B cell (primary cell): ENCODE measurements at regions of chrX and their contacts with region 1.

Region 1: GRCh38 chrX:74614093-74614909 is at the start of gene RLIM:
- DNase-seq: peak; percentile 94
- ATAC-seq: peak; percentile 85
- H3K4me3 ChIP-seq: peak within 1 kb of the TSS; percentile 67 to 94 (median 75)
- H3K4me3 Mint-ChIP-seq: peak within 1 kb of the TSS; percentile 99
- H3K27ac ChIP-seq: peak within 1 kb of the TSS; percentile 98 to 99
- H3K27ac Mint-ChIP-seq: peak within 1 kb of the TSS; percentile 100
- H3K4me1 ChIP-seq: peaks cover 0 to 14% of the 10 kb centered on the region in 2 donors
- H3K4me1 Mint-ChIP-seq: peaks cover 23% of the 10 kb centered on the region
- H3K27me3 ChIP-seq: no peaks in the 10 kb centered on the region
- H3K27me3 Mint-ChIP-seq: no peaks in the 10 kb centered on the region
- CTCF ChIP-seq: no peak
- total RNA-seq, gene RLIM: 40.8 and 43.1 TPM in 2 replicates

Region 2: GRCh38 chrX:73562984-73563737 is 1051.1 kb before region 1 on chrX and contains the start of gene CHIC1:
- CTCF ChIA-PET with region 1: no interaction called
- POLR2A ChIA-PET with region 1: no interaction called
- intact Hi-C with region 1: loop called (anchors 10 kb)
- DNase-seq: peak; percentile 85
- ATAC-seq: peak; percentile 67
- H3K4me3 ChIP-seq: peak within 1 kb of the TSS; percentile 58 to 77 (median 71)
- H3K4me3 Mint-ChIP-seq: peak within 1 kb of the TSS; percentile 93
- H3K27ac ChIP-seq: peak within 1 kb of the TSS; percentile 85 to 92
- H3K27ac Mint-ChIP-seq: peak within 1 kb of the TSS; percentile 99
- H3K4me1 ChIP-seq: peaks cover 7 to 13% of the 10 kb centered on the region in 2 donors
- H3K4me1 Mint-ChIP-seq: peaks cover 23% of the 10 kb centered on the region
- H3K27me3 ChIP-seq: no peaks in the 10 kb centered on the region
- H3K27me3 Mint-ChIP-seq: no peaks in the 10 kb centered on the region
- CTCF ChIP-seq: no peak
- total RNA-seq, gene CHIC1: 18.8 and 21.4 TPM in 2 replicates

Region 3: DNA sequence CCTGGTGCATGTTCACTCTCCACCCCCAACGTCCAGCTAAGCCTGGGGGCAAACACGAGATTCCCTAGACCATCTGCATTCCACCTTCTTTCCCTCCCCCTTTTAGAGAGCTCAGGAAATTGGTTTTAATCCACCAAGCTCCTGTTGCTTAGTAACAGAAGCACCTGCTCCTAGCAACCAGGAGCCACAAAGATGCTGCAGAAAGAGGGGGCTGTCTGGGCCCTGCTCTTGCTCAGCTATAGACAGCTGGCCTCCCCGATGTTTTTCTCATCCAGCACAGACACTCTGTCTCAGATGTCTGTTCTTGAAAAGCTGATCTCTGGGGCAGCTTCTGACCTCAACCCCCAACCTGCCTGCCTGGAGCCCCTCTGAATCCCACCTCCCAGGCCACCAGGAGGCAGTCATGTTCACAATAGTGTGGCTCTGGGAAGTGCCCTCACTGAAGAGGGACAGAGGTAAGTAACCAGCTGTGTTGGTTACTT is 121.5 kb before region 1 on chrX:
- CTCF ChIA-PET with region 1: no interaction called
- POLR2A ChIA-PET with region 1: no interaction called
- intact Hi-C with region 1: no loop called
- DNase-seq: peak; percentile 19
- ATAC-seq: peak; percentile 24
- H3K4me3 ChIP-seq: no peak overlapping the region
- H3K4me3 Mint-ChIP-seq: no peak overlapping the region
- H3K27ac ChIP-seq: no peak overlapping the region
- H3K27ac Mint-ChIP-seq: no peak overlapping the region
- H3K4me1 ChIP-seq: no peaks in the 10 kb centered on the region
- H3K4me1 Mint-ChIP-seq: no peaks in the 10 kb centered on the region
- H3K27me3 ChIP-seq: no peaks in the 10 kb centered on the region
- H3K27me3 Mint-ChIP-seq: no peaks in the 10 kb centered on the region
- CTCF ChIP-seq: no peak

Region 4: DNA sequence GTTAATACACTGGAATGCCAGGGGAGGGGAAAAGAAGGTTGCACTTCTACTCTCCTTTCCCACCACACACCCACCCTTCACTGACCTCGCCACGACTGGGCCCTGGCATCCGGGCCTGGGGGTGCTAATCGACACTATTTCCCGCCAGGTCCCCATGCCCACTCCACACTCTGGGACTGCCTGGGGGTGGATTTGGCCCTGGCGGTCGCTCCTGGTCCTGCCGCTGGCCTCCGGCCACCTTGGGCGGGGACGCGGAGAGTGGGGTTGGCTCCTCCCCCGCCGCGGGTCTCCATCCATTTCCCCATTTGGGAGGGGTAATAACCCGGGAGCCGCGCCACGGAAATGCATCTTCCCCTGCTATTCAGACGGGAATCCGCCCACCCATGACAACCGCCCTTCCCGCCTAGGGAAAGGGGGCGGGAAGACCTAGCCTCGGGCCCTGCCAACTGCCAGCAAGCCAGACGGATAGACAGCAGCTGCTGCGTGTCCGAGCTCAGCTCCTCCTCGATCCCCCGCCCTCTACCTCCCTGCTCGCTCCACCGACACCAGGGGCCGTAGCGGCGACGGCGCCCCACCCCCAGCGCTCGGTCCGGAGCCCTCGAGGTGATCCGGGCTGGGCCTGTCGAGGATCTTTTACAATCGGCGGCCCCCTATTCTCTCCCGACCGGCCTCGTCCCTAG is 78.0 kb before region 1 on chrX:
- CTCF ChIA-PET with region 1: no interaction called
- POLR2A ChIA-PET with region 1: no interaction called
- intact Hi-C with region 1: loop called (anchors 10 kb)
- DNase-seq: peak; percentile 50
- ATAC-seq: peak; percentile 70
- H3K4me3 ChIP-seq: peak overlapping the region; percentile 26 to 62 (median 54)
- H3K4me3 Mint-ChIP-seq: peak overlapping the region; percentile 86
- H3K27ac ChIP-seq: peak overlapping the region in 1 of 2 donors; percentile 51
- H3K27ac Mint-ChIP-seq: peak overlapping the region; percentile 37
- H3K4me1 ChIP-seq: peaks cover 5 to 14% of the 10 kb centered on the region in 2 donors
- H3K4me1 Mint-ChIP-seq: peaks cover 9% of the 10 kb centered on the region
- H3K27me3 ChIP-seq: no peaks in the 10 kb centered on the region
- H3K27me3 Mint-ChIP-seq: no peaks in the 10 kb centered on the region
- CTCF ChIP-seq: no peak

Region 5: GRCh38 chrX:75156021-75156945 is 542.0 kb after region 1 on chrX and contains the start of gene ABCB7:
- CTCF ChIA-PET with region 1: no interaction called
- POLR2A ChIA-PET with region 1: no interaction called
- intact Hi-C with region 1: loop called (anchors 2 kb)
- DNase-seq: peak; percentile 81
- ATAC-seq: peak; percentile 89
- H3K4me3 ChIP-seq: peak within 1 kb of the TSS; percentile 45 to 75 (median 70)
- H3K4me3 Mint-ChIP-seq: peak within 1 kb of the TSS; percentile 86
- H3K27ac ChIP-seq: peak within 1 kb of the TSS; percentile 78 to 82
- H3K27ac Mint-ChIP-seq: peak within 1 kb of the TSS; percentile 94
- H3K4me1 ChIP-seq: peaks cover 6 to 9% of the 10 kb centered on the region in 2 donors
- H3K4me1 Mint-ChIP-seq: peaks cover 37% of the 10 kb centered on the region
- H3K27me3 ChIP-seq: no peaks in the 10 kb centered on the region
- H3K27me3 Mint-ChIP-seq: no peaks in the 10 kb centered on the region
- CTCF ChIP-seq: no peak
- total RNA-seq, gene ABCB7: 34.7 and 39.1 TPM in 2 replicates

Region 6: GRCh38 chrX:75746891-75747639 is 1132.8 kb after region 1 on chrX:
- CTCF ChIA-PET with region 1: no interaction called
- POLR2A ChIA-PET with region 1: no interaction called
- intact Hi-C with region 1: loop called (anchors 5 kb)
- DNase-seq: peak; percentile 47
- ATAC-seq: peak; percentile 74
- H3K4me3 ChIP-seq: peak overlapping the region; percentile 25 to 64 (median 53)
- H3K4me3 Mint-ChIP-seq: peak overlapping the region; percentile 90
- H3K27ac ChIP-seq: no peak overlapping the region
- H3K27ac Mint-ChIP-seq: peak overlapping the region; percentile 63
- H3K4me1 ChIP-seq: peaks cover 6 to 7% of the 10 kb centered on the region in 2 donors
- H3K4me1 Mint-ChIP-seq: peaks cover 12% of the 10 kb centered on the region
- H3K27me3 ChIP-seq: no peaks in the 10 kb centered on the region
- H3K27me3 Mint-ChIP-seq: no peaks in the 10 kb centered on the region
- CTCF ChIP-seq: no peak